ENCODE measurements at regions of chr3 and their contacts with region 1.

Region 1: DNA sequence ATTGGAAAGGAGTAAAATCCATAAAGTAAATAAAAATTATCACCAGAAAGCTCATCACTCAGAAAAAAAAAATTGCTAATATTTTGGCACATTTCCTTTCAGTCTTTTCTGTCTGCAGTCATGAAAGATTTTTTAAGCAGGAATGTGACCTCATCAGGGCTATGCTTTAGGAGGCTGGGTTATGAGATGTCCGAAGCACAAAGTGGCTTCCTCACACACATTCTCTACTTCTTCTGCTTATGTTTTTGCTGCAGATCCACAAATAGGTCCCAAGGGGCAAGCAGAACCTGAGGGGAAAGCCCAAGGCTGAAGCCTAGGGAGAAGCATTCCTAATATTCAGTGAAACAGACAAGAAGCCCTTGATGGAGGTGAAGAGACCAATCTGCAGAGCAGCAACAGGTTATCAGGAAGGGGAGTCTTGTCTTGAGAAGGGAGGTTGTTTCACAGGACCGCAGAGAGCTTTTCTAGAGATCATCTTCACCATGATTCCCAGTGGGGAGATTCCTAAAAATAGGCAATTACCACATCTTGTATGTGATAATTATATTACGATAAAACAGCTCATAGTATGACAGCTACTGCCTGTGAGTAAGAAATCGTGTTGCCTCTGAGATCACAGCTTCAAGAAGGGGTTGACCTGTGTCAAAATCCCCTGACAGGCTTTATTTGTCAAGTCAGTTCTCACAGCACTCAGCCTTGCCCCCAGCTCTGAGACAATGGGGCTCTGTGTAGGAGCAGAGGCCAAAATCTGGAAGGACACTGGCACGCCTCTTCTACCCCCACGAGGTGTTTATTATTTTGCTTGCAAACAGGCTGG is 60.5 kb downstream of the IGF2BP2 start:
- DNase-seq: peak; percentile 65
- H3K4me3 ChIP-seq: peak overlapping the region in 1 of 3 experiments; percentile 26
- H3K27ac ChIP-seq: peak overlapping the region; percentile 94
- H3K4me1 ChIP-seq: peaks cover 79% of the 10 kb centered on the region
- H3K27me3 ChIP-seq: no peaks in the 10 kb centered on the region
- CTCF ChIP-seq: no peak
- POLR2A ChIP-seq: no peak

Region 2: DNA sequence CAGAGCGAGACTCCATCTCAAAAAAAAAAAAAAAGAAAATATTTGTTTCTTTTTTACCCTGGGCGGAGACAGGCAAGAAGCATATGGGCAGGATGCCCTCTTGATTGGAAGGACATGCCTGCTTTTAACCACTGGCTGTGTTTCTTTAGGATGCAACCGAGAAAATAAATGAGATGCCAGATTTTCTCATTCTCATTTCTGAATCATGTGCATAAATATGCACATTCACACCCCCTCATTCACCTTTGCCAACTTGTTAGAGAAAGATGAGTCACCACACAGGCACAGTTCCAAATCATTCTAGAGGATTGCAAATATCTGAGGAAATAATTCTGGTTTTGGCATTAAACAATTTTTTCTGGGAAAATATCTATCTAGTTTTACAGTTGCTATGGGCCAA is 215.3 kb before region 1 on chr3:
- CTCF ChIA-PET with region 1: no interaction called
- POLR2A ChIA-PET with region 1: no interaction called
- dilution Hi-C with region 1: no loop called
- intact Hi-C with region 1: no loop called
- DNase-seq: peak; percentile 84
- H3K4me3 ChIP-seq: no peak overlapping the region
- H3K27ac ChIP-seq: no peak overlapping the region
- H3K4me1 ChIP-seq: peaks cover 4% of the 10 kb centered on the region
- H3K27me3 ChIP-seq: no peaks in the 10 kb centered on the region
- CTCF ChIP-seq: no peak
- POLR2A ChIP-seq: no peak

Region 3: DNA sequence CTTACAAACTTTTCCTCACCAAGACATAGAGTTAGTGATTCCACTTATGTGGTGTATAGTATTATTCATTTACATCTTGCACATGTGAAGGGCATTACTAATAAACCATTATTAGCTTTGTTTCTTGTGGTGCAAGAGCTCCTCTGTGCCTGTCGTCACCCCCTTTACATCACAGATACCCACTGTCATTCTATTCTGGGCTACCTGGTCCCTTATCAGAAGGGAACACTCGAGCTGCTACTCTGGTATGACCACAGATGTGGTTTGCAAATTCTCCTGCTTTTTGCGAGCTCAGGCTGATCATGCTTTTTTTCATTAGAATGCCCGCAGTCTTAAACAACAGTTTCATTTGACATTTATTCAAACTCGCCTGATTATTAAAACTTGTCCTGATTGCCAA is 192.2 kb before region 1 on chr3:
- CTCF ChIA-PET with region 1: no interaction called
- POLR2A ChIA-PET with region 1: no interaction called
- dilution Hi-C with region 1: no loop called
- intact Hi-C with region 1: no loop called
- DNase-seq: no peak
- H3K4me3 ChIP-seq: no peak overlapping the region
- H3K27ac ChIP-seq: no peak overlapping the region
- H3K4me1 ChIP-seq: no peaks in the 10 kb centered on the region
- H3K27me3 ChIP-seq: no peaks in the 10 kb centered on the region
- CTCF ChIP-seq: no peak
- POLR2A ChIP-seq: no peak

Region 4: DNA sequence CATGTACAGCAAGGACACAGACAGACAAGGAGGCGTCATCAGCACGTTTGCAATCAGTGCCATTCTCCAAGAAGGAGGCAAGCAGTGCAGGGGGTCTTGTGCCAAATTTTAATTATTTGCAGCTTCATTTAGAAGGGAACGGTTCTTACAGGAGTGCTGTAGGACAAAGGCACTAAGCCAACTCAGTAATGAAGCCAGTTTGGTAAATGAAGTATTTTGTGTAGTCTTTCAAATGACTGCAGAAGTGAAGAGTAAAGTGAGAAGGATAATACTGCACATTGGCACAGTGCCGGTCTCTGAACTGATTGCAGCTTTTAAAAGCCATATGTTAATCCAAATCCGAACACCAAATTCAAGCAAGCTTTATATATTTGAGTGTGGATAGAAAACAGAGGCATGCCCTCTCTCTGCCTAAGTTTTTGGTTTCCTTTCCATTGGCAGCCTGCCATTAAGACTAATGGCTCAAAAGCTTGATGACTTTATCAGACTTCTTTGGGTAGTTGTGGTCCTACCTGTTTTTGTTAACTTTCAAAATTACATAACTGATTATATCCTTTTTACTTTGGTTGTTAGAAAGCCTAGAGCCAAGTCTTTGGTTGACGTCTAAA is 77.0 kb before region 1 on chr3:
- CTCF ChIA-PET with region 1: interaction called, 18 read pairs
- POLR2A ChIA-PET with region 1: no interaction called
- dilution Hi-C with region 1: no loop called
- intact Hi-C with region 1: loop called (anchors 2 kb)
- DNase-seq: no peak
- H3K4me3 ChIP-seq: no peak overlapping the region
- H3K27ac ChIP-seq: peak overlapping the region; percentile 93
- H3K4me1 ChIP-seq: peaks cover 19% of the 10 kb centered on the region
- H3K27me3 ChIP-seq: no peaks in the 10 kb centered on the region
- CTCF ChIP-seq: no peak
- POLR2A ChIP-seq: no peak

Region 5: GRCh38 chr3:185711255-185711870 is 53.0 kb before region 1 on chr3:
- CTCF ChIA-PET with region 1: interaction called, 23 read pairs
- POLR2A ChIA-PET with region 1: no interaction called
- dilution Hi-C with region 1: no loop called
- intact Hi-C with region 1: no loop called
- DNase-seq: peak; percentile 48
- H3K4me3 ChIP-seq: no peak overlapping the region
- H3K27ac ChIP-seq: peak overlapping the region; percentile 61
- H3K4me1 ChIP-seq: peaks cover 36% of the 10 kb centered on the region
- H3K27me3 ChIP-seq: no peaks in the 10 kb centered on the region
- CTCF ChIP-seq: no peak
- POLR2A ChIP-seq: no peak

Region 6: GRCh38 chr3:185744997-185745843 is 19.2 kb before region 1 on chr3:
- CTCF ChIA-PET with region 1: interaction called, 347 read pairs
- POLR2A ChIA-PET with region 1: no interaction called
- dilution Hi-C with region 1: no loop called
- intact Hi-C with region 1: loop called (anchors 1 kb)
- DNase-seq: peak; percentile 81
- H3K4me3 ChIP-seq: no peak overlapping the region
- H3K27ac ChIP-seq: peak overlapping the region; percentile 79
- H3K4me1 ChIP-seq: peaks cover 29% of the 10 kb centered on the region
- H3K27me3 ChIP-seq: no peaks in the 10 kb centered on the region
- CTCF ChIP-seq: no peak
- POLR2A ChIP-seq: peak; percentile 55

Region 7: GRCh38 chr3:185789891-185790830 is 25.8 kb after region 1 on chr3:
- CTCF ChIA-PET with region 1: interaction called, 17 read pairs
- POLR2A ChIA-PET with region 1: no interaction called
- dilution Hi-C with region 1: no loop called
- intact Hi-C with region 1: no loop called
- DNase-seq: peak; percentile 57
- H3K4me3 ChIP-seq: no peak overlapping the region
- H3K27ac ChIP-seq: no peak overlapping the region
- H3K4me1 ChIP-seq: peaks cover 17% of the 10 kb centered on the region
- H3K27me3 ChIP-seq: no peaks in the 10 kb centered on the region
- CTCF ChIP-seq: no peak
- POLR2A ChIP-seq: no peak

Region 8: DNA sequence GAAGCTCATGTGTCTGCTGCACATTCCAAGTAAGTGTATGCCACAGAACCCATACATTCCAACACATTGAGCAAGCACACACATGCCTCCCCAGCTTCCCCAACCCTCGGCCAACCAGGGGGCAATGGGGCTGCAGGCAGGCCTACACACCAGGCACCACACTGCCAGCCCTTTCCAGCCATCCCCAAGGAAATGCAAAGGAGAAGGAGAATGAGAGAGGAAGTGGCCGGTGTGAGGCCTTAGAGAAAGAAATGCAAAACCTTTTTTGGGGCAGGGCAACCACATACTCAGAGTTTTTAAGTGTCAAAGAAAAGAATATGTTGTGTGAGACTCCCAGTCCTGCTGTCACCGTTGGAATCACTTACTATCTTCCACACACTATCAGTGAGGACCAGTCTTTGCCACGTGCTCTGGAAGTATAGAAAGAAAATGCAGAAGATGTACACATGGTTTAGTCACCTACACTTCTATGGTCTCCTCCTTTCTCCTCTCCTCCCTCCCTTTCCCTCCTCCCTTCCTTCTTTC is 49.4 kb after region 1 on chr3:
- CTCF ChIA-PET with region 1: interaction called, 15 read pairs
- POLR2A ChIA-PET with region 1: no interaction called
- dilution Hi-C with region 1: no loop called
- intact Hi-C with region 1: no loop called
- DNase-seq: no peak
- H3K4me3 ChIP-seq: no peak overlapping the region
- H3K27ac ChIP-seq: no peak overlapping the region
- H3K4me1 ChIP-seq: peaks cover 30% of the 10 kb centered on the region
- H3K27me3 ChIP-seq: no peaks in the 10 kb centered on the region
- CTCF ChIP-seq: no peak
- POLR2A ChIP-seq: no peak

Region 9: GRCh38 chr3:185912929-185913901 is 148.8 kb after region 1 on chr3:
- CTCF ChIA-PET with region 1: interaction called, 11 read pairs
- POLR2A ChIA-PET with region 1: no interaction called
- dilution Hi-C with region 1: no loop called
- intact Hi-C with region 1: no loop called
- DNase-seq: no peak
- H3K4me3 ChIP-seq: no peak overlapping the region
- H3K27ac ChIP-seq: no peak overlapping the region
- H3K4me1 ChIP-seq: no peaks in the 10 kb centered on the region
- H3K27me3 ChIP-seq: no peaks in the 10 kb centered on the region
- CTCF ChIP-seq: no peak
- POLR2A ChIP-seq: peak; percentile 65